IMR-90 (cell line): ENCODE measurements at regions of chr2 and their contacts with region 1.

Region 1: GRCh38 chr2:220736777-220737176 is 835.3 kb downstream of the EPHA4 start:
- DNase-seq: peak; percentile 3
- ATAC-seq: no peak
- H3K4me3 ChIP-seq: no peak overlapping the region
- H3K27ac ChIP-seq: no peak overlapping the region
- H3K4me1 ChIP-seq: no peaks in the 10 kb centered on the region
- H3K27me3 ChIP-seq: no peaks in the 10 kb centered on the region
- CTCF ChIP-seq: no peak
- POLR2A ChIP-seq: no peak
- RAD21 ChIP-seq: no peak

Region 2: GRCh38 chr2:220533485-220533884 is 203.3 kb before region 1 on chr2:
- CTCF ChIA-PET with region 1: no interaction called
- POLR2A ChIA-PET with region 1: no interaction called
- dilution Hi-C with region 1: no loop called
- in situ Hi-C with region 1: no loop called
- intact Hi-C with region 1: no loop called
- DNase-seq: peak; percentile 57
- ATAC-seq: peak; percentile 71
- H3K4me3 ChIP-seq: no peak overlapping the region
- H3K27ac ChIP-seq: no peak overlapping the region
- H3K4me1 ChIP-seq: peaks cover 4% of the 10 kb centered on the region
- H3K27me3 ChIP-seq: no peaks in the 10 kb centered on the region
- CTCF ChIP-seq: peak; percentile 31; the same call in 1 of the 2 replicates
- POLR2A ChIP-seq: no peak
- RAD21 ChIP-seq: peak; percentile 32

Region 3: GRCh38 chr2:221050020-221050795 is 313.4 kb after region 1 on chr2:
- CTCF ChIA-PET with region 1: no interaction called
- POLR2A ChIA-PET with region 1: no interaction called
- dilution Hi-C with region 1: no loop called
- in situ Hi-C with region 1: no loop called
- intact Hi-C with region 1: no loop called
- DNase-seq: no peak
- ATAC-seq: no peak
- H3K4me3 ChIP-seq: no peak overlapping the region
- H3K27ac ChIP-seq: no peak overlapping the region
- H3K4me1 ChIP-seq: peaks cover 4% of the 10 kb centered on the region; the same call in 1 of the 2 replicates
- H3K27me3 ChIP-seq: peaks cover 8% of the 10 kb centered on the region
- CTCF ChIP-seq: no peak
- POLR2A ChIP-seq: no peak
- RAD21 ChIP-seq: no peak

Region 4: DNA sequence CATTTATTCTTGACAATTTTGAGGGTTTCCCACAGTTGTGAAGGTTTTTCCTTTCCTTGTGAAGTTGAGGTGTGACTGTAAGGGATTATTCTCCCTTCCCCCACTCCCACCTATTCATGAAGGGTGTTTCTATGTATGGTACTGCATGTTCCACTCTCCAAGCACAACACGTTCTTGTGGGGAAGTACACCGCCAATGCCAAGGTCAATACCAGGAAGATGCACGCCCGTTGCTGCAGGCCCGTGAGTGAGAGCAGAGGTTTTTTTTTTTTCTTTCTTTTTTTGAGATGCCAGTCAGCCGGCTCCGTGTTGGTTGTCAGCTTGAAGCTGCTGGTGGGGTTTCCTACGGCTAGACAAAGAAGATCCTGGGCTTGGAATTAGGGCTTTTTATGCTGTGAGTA is 873.9 kb after region 1 on chr2:
- CTCF ChIA-PET with region 1: no interaction called
- POLR2A ChIA-PET with region 1: interaction called, 13 read pairs
- dilution Hi-C with region 1: no loop called
- in situ Hi-C with region 1: no loop called
- intact Hi-C with region 1: no loop called
- DNase-seq: no peak
- ATAC-seq: no peak
- H3K4me3 ChIP-seq: no peak overlapping the region
- H3K27ac ChIP-seq: no peak overlapping the region
- H3K4me1 ChIP-seq: no peaks in the 10 kb centered on the region
- H3K27me3 ChIP-seq: no peaks in the 10 kb centered on the region; the same call in 1 of the 2 replicates
- CTCF ChIP-seq: no peak
- POLR2A ChIP-seq: no peak
- RAD21 ChIP-seq: no peak